Activated CD4-positive, alpha-beta T cell treated with anti-CD3 and anti-CD28 coated beads for 36 hours (primary cell): ENCODE measurements at regions of chr2 and their contacts with region 1.

Region 1: DNA sequence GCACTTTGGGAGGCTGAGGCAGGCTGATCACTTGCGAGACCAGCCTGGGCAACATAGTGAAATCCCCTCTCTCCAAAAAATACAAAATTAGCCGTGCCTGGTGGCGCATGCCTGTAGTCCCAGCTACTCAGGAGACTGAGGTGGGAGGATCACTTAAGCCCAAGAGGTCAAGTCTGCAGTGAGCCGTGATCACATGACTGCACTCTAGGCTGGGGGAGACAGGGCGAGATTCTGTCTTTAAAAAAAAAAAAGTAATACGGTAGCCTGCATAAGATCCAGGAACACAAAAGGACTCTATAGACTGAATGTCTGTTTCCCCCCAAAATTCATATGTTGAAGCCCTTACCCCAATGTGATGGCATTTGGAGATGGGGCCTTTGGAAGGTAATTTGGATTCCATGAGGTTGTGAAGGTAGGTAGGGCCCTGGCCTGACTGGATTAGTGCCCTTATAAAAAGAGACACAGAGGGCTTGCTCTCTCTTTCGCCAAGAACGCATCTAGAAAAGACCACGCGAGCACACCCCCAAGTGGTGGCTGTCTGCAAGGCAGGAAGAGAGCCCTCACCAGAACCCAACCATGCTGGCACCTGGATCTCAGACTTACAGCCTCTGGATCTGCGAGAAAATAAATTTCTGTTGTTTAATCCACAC is 17.0 kb downstream of the MBOAT2 start:
- DNase-seq: peak; percentile 47
- ATAC-seq: peak; percentile 51
- H3K4me3 Mint-ChIP-seq: no peak overlapping the region
- H3K27ac Mint-ChIP-seq: no peak overlapping the region
- H3K4me1 Mint-ChIP-seq: no peaks in the 10 kb centered on the region
- H3K27me3 Mint-ChIP-seq: no peaks in the 10 kb centered on the region

Region 2: GRCh38 chr2:8693155-8693821 is 293.2 kb before region 1 on chr2:
- CTCF ChIA-PET with region 1: no interaction called
- POLR2A ChIA-PET with region 1: no interaction called
- intact Hi-C with region 1: loop called in 1 of 2 experiments (anchors 2 kb)
- DNase-seq: peak; percentile 75
- ATAC-seq: peak; percentile 84
- H3K4me3 Mint-ChIP-seq: no peak overlapping the region
- H3K27ac Mint-ChIP-seq: no peak overlapping the region
- H3K4me1 Mint-ChIP-seq: no peaks in the 10 kb centered on the region
- H3K27me3 Mint-ChIP-seq: peaks cover 21% of the 10 kb centered on the region

Region 3: GRCh38 chr2:8872821-8873432 is 113.5 kb before region 1 on chr2:
- CTCF ChIA-PET with region 1: no interaction called
- POLR2A ChIA-PET with region 1: no interaction called
- intact Hi-C with region 1: loop called in 1 of 2 experiments (anchors 5 kb)
- DNase-seq: no peak
- ATAC-seq: peak; percentile 44
- H3K4me3 Mint-ChIP-seq: no peak overlapping the region
- H3K27ac Mint-ChIP-seq: no peak overlapping the region
- H3K4me1 Mint-ChIP-seq: no peaks in the 10 kb centered on the region
- H3K27me3 Mint-ChIP-seq: peaks cover 4% of the 10 kb centered on the region